Activated B cell treated with CpG ODN at 0.5 μM for 24 hours (primary cell): ENCODE measurements at regions of chr2 and their contacts with region 1.

Region 1: GRCh38 chr2:178478439-178479274 is at the start of gene FKBP7:
- DNase-seq: peak; percentile 69
- ATAC-seq: peak; percentile 70
- H3K4me3 Mint-ChIP-seq: peak within 1 kb of the TSS; percentile 94
- H3K27ac Mint-ChIP-seq: peak within 1 kb of the TSS; percentile 97
- H3K4me1 Mint-ChIP-seq: peaks cover 43% of the 10 kb centered on the region
- H3K27me3 Mint-ChIP-seq: no peaks in the 10 kb centered on the region
- CTCF ChIP-seq: no peak
- total RNA-seq, gene FKBP7: 0.44 and 0.64 TPM in 2 replicates

Region 2: DNA sequence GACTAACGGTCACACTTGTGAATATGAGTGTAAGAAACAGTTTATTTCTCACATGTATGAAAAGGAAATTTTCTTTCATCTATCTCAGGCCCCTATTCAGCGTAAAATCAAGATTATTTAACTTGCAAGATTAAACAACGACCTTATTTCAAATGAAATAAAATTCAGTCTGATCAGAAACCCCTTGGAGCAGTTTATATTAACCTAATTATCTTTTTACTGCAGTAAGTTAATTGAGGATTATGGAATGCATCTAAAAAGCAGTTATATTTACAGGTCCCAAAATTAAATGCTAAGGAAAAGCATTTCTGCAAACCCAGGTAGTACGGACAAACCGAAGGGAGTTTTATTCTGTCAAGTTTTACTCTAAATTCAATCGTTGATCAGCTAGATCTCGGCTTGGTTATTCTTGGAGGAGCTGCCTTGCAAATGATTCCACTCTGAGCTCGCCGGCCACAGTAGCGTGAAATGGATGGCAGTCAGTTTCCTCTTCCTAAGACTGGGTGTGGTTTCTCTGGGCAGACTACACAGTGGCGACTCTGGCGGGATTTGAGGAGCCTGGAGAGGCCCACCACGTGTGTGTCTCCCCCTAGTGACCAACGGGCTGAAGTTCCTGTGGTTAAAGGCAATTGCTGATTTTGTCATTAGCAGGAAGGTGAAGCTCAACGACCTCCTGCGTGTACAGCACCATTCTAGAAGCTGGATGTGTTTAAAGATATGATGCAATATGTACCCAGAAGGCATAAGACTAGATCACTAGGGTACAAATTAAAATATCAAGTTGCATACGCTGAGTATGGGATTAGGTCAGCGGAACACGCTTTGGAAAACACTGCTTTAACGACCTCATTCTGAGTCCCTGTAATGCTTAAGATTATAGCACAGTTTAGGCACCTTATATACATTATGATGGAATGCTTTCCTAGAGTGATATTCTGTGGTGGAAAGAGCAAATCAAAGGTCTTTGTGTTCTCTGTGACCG is 64.1 kb before region 1 on chr2:
- CTCF ChIA-PET with region 1: interaction called, 5 read pairs
- POLR2A ChIA-PET with region 1: interaction called, 3 read pairs
- intact Hi-C with region 1: loop called (anchors 1 kb)
- DNase-seq: peak; percentile 58
- ATAC-seq: peak; percentile 75
- H3K4me3 Mint-ChIP-seq: peak overlapping the region; percentile 94
- H3K27ac Mint-ChIP-seq: peak overlapping the region; percentile 89
- H3K4me1 Mint-ChIP-seq: peaks cover 20% of the 10 kb centered on the region
- H3K27me3 Mint-ChIP-seq: no peaks in the 10 kb centered on the region
- CTCF ChIP-seq: no peak

Region 3: GRCh38 chr2:178426388-178426787 is 52.3 kb before region 1 on chr2:
- CTCF ChIA-PET with region 1: no interaction called
- POLR2A ChIA-PET with region 1: no interaction called
- intact Hi-C with region 1: no loop called
- DNase-seq: no peak
- ATAC-seq: no peak
- H3K4me3 Mint-ChIP-seq: no peak overlapping the region
- H3K27ac Mint-ChIP-seq: no peak overlapping the region
- H3K4me1 Mint-ChIP-seq: no peaks in the 10 kb centered on the region
- H3K27me3 Mint-ChIP-seq: no peaks in the 10 kb centered on the region
- CTCF ChIP-seq: no peak

Region 4: GRCh38 chr2:178498137-178498536 is 19.5 kb after region 1 on chr2:
- CTCF ChIA-PET with region 1: no interaction called
- POLR2A ChIA-PET with region 1: no interaction called
- intact Hi-C with region 1: loop called (anchors 2 kb)
- DNase-seq: no peak
- ATAC-seq: no peak
- H3K4me3 Mint-ChIP-seq: no peak overlapping the region
- H3K27ac Mint-ChIP-seq: no peak overlapping the region
- H3K4me1 Mint-ChIP-seq: peaks cover 7% of the 10 kb centered on the region
- H3K27me3 Mint-ChIP-seq: no peaks in the 10 kb centered on the region
- CTCF ChIP-seq: no peak

Region 5: GRCh38 chr2:178522950-178523595 is 44.4 kb after region 1 on chr2:
- CTCF ChIA-PET with region 1: no interaction called
- POLR2A ChIA-PET with region 1: interaction called, 3 read pairs
- intact Hi-C with region 1: loop called (anchors 1 kb)
- DNase-seq: peak; percentile 63
- ATAC-seq: peak; percentile 99
- H3K4me3 Mint-ChIP-seq: peak overlapping the region; percentile 93
- H3K27ac Mint-ChIP-seq: peak overlapping the region; percentile 84
- H3K4me1 Mint-ChIP-seq: peaks cover 34% of the 10 kb centered on the region
- H3K27me3 Mint-ChIP-seq: no peaks in the 10 kb centered on the region
- CTCF ChIP-seq: no peak

Region 6: GRCh38 chr2:178530625-178531142 is 52.0 kb after region 1 on chr2:
- CTCF ChIA-PET with region 1: no interaction called
- POLR2A ChIA-PET with region 1: interaction called, 6 read pairs
- intact Hi-C with region 1: loop called (anchors 1 kb)
- DNase-seq: peak; percentile 43
- ATAC-seq: peak; percentile 95
- H3K4me3 Mint-ChIP-seq: peak overlapping the region; percentile 81
- H3K27ac Mint-ChIP-seq: peak overlapping the region; percentile 91
- H3K4me1 Mint-ChIP-seq: peaks cover 57% of the 10 kb centered on the region
- H3K27me3 Mint-ChIP-seq: no peaks in the 10 kb centered on the region
- CTCF ChIP-seq: no peak

Region 7: DNA sequence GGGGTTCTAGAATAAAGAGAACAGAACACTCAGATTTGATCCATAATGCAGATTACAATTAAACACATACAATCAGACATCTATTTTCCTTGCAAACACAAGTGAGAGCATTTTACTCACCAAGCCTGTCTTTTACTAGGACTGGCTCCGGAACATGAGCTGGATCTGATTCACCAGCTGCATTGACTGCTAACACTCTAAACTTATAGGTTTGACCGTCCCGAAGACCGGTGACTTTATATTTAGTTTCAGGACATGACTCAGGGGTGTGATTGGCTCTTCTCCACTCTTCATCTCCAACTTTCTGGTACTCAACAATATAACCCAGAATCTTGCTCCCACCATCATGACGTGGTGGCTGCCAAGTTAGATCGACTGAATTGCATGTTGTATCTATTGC is 114.0 kb after region 1 on chr2:
- CTCF ChIA-PET with region 1: no interaction called
- POLR2A ChIA-PET with region 1: no interaction called
- intact Hi-C with region 1: loop called (anchors 5 kb)
- DNase-seq: no peak
- ATAC-seq: no peak
- H3K4me3 Mint-ChIP-seq: no peak overlapping the region
- H3K27ac Mint-ChIP-seq: no peak overlapping the region
- H3K4me1 Mint-ChIP-seq: no peaks in the 10 kb centered on the region
- H3K27me3 Mint-ChIP-seq: no peaks in the 10 kb centered on the region
- CTCF ChIP-seq: no peak

Region 8: DNA sequence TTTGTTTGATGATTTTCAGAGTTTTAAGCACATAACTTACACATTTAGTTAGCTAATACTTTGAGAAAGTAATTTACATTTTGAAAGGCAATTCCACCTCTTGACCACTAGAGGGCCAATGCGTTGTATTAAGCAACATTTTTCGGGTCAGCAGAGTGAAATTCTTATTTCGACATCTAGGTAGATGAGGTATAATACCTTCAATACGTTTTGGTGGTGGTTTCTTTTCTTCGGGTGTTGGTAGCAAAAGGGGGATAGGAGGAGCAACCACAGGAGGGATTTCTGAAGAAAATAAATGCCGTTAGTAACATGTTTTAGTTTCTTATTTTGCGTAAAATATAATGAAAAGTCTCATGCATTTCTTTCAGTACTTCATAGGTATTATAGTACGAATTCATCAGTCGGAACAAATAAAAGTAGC is 222.3 kb after region 1 on chr2:
- CTCF ChIA-PET with region 1: no interaction called
- POLR2A ChIA-PET with region 1: no interaction called
- intact Hi-C with region 1: loop called (anchors 2 kb)
- DNase-seq: no peak
- ATAC-seq: no peak
- H3K4me3 Mint-ChIP-seq: no peak overlapping the region
- H3K27ac Mint-ChIP-seq: no peak overlapping the region
- H3K4me1 Mint-ChIP-seq: no peaks in the 10 kb centered on the region
- H3K27me3 Mint-ChIP-seq: no peaks in the 10 kb centered on the region
- CTCF ChIP-seq: peak; percentile 93